ENCODE measurements at regions of chrX and their contacts with region 1.

Region 1: GRCh38 chrX:119617517-119618164 is 11.4 kb upstream of the NKRF start:
- DNase-seq: peak in 1 of 35 experiments; percentile 6
- ATAC-seq: no peak
- H3K4me3 ChIP-seq: no peak overlapping the region
- H3K4me3 Mint-ChIP-seq: no peak overlapping the region
- H3K27ac ChIP-seq: no peak overlapping the region
- H3K27ac Mint-ChIP-seq: peak overlapping the region; percentile 8 to 58
- H3K4me1 ChIP-seq: no peaks in the 10 kb centered on the region
- H3K4me1 Mint-ChIP-seq: peaks cover 9 to 18% (median 12%) of the 10 kb centered on the region in 3 donors
- H3K27me3 ChIP-seq: no peaks in the 10 kb centered on the region
- H3K27me3 Mint-ChIP-seq: no peaks in the 10 kb centered on the region

Region 2: DNA sequence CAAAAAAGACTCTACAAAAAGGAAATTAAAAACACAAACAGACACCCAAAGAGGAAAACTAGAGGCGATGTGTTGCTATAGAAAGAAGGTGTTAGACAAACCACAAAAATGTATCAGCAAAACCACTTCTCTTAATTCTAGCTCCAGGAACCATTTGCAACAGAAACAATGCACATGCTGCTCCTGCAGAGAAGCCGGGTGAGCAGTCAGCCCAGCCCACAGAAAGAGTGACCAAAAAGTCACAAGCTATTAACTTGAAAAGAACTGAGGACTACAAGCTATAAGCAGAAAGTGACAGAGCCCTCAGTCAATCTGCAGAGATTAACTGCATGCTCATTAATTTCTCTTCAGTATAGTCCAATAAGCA is 1404.8 kb before region 1 on chrX:
- CTCF ChIA-PET with region 1: no interaction called
- POLR2A ChIA-PET with region 1: no interaction called
- DNase-seq: no peak
- ATAC-seq: no peak
- H3K4me3 ChIP-seq: no peak overlapping the region
- H3K4me3 Mint-ChIP-seq: no peak overlapping the region
- H3K27ac ChIP-seq: no peak overlapping the region
- H3K27ac Mint-ChIP-seq: no peak overlapping the region
- H3K4me1 ChIP-seq: no peaks in the 10 kb centered on the region
- H3K4me1 Mint-ChIP-seq: no peaks in the 10 kb centered on the region
- H3K27me3 ChIP-seq: no peaks in the 10 kb centered on the region
- H3K27me3 Mint-ChIP-seq: peaks cover 8 to 17% of the 10 kb centered on the region in 2 donors

Region 3: DNA sequence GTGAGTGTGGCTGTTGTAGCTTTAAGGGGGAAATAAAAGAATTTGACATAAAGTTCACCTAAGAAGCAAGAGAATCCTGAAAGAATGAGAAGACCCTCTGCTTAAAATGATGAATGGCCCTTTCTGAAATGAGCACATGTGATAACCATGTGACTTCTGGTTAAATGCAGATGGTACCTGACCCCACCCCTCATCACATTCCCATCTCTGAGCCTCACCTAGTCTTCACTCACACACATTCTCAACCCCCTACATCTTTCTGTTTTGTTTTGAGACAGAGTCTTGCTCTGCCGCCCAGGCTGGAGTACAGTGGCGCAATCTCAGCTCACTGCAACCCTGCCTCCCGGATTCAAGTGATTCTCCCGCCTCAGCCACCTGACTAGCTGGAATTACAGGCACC is 43.8 kb after region 1 on chrX:
- CTCF ChIA-PET with region 1: no interaction called
- POLR2A ChIA-PET with region 1: interaction called, 4 to 13 read pairs
- DNase-seq: no peak
- ATAC-seq: no peak
- H3K4me3 ChIP-seq: no peak overlapping the region
- H3K4me3 Mint-ChIP-seq: no peak overlapping the region
- H3K27ac ChIP-seq: no peak overlapping the region
- H3K27ac Mint-ChIP-seq: peak overlapping the region in 1 of 2 donors; percentile 46
- H3K4me1 ChIP-seq: peaks cover 0 to 6% of the 10 kb centered on the region in 2 experiments
- H3K4me1 Mint-ChIP-seq: peaks cover 31 to 35% (median 35%) of the 10 kb centered on the region in 3 donors
- H3K27me3 ChIP-seq: no peaks in the 10 kb centered on the region
- H3K27me3 Mint-ChIP-seq: no peaks in the 10 kb centered on the region